ENCODE measurements at regions of chr19 and their contacts with region 1.

Region 1: GRCh38 chr19:35783469-35784434 is 8.4 kb downstream of the ARHGAP33 start:
- DNase-seq: peak; percentile 64
- ATAC-seq: peak; percentile 39
- H3K4me3 Mint-ChIP-seq: peak overlapping the region; percentile 65
- H3K27ac Mint-ChIP-seq: peak overlapping the region; percentile 5; the same call in 1 of the 2 replicates
- H3K4me1 Mint-ChIP-seq: peaks cover 29% of the 10 kb centered on the region
- H3K27me3 Mint-ChIP-seq: no peaks in the 10 kb centered on the region
- CTCF ChIP-seq: no peak

Region 2: GRCh38 chr19:35740423-35741202 is 43.1 kb before region 1 on chr19:
- CTCF ChIA-PET with region 1: interaction called, 41 read pairs
- POLR2A ChIA-PET with region 1: interaction called, 10 read pairs
- DNase-seq: peak; percentile 99
- ATAC-seq: peak; percentile 76
- H3K4me3 Mint-ChIP-seq: peak overlapping the region; percentile 81
- H3K27ac Mint-ChIP-seq: peak overlapping the region; percentile 99
- H3K4me1 Mint-ChIP-seq: peaks cover 11% of the 10 kb centered on the region
- H3K27me3 Mint-ChIP-seq: no peaks in the 10 kb centered on the region
- CTCF ChIP-seq: no peak

Region 3: DNA sequence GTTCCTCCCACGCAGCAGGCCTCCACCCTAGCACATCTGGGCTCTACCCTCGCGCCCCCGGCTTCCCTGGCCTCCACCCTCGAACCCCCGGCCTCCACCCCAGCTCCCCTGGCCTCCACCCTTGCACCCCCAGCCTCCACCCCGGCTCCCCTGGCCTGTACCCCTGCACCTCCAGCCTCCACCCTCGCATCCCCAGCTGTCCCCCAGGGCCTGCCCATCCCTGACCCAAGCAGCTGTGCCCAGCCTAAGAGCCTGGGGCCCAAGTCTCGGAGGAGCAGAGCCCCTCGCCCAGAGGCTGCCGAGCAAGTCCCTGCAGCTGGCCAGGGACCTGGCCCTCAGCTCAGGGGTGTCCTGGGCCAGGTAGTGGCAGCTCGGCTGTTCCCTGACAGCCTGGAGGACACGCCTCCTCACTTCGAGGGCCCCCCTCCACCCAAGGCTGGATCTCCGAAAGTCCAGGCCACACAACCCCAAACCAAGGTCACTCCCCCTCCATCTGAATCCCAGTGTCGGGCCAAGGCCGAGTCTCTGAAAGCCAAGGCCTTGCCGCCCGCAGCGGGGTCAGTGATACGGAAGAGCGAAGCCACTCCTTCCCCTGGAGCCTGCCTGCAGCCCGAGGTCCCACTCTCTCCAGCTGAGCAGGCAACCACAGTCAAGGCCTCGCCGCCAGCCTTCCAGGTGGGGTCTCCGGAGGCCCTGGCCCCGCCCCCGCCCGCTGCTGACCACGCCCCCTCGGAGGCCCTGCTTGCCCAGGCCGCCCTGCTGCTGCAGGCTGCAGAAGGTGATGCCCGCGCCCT is 16.3 kb before region 1 on chr19:
- CTCF ChIA-PET with region 1: interaction called, 11 read pairs
- POLR2A ChIA-PET with region 1: no interaction called
- DNase-seq: peak; percentile 92
- ATAC-seq: peak; percentile 94
- H3K4me3 Mint-ChIP-seq: peak overlapping the region; percentile 54
- H3K27ac Mint-ChIP-seq: peak overlapping the region; percentile 79
- H3K4me1 Mint-ChIP-seq: peaks cover 13% of the 10 kb centered on the region
- H3K27me3 Mint-ChIP-seq: peaks cover 2% of the 10 kb centered on the region
- CTCF ChIP-seq: no peak

Region 4: GRCh38 chr19:35822579-35822978 is 38.8 kb after region 1 on chr19:
- CTCF ChIA-PET with region 1: interaction called, 28 read pairs
- POLR2A ChIA-PET with region 1: no interaction called
- DNase-seq: no peak
- ATAC-seq: peak; percentile 32; the same call in 1 of the 2 replicates
- H3K4me3 Mint-ChIP-seq: no peak overlapping the region
- H3K27ac Mint-ChIP-seq: no peak overlapping the region
- H3K4me1 Mint-ChIP-seq: peaks cover 3% of the 10 kb centered on the region
- H3K27me3 Mint-ChIP-seq: peaks cover 48% of the 10 kb centered on the region
- CTCF ChIP-seq: no peak

Region 5: DNA sequence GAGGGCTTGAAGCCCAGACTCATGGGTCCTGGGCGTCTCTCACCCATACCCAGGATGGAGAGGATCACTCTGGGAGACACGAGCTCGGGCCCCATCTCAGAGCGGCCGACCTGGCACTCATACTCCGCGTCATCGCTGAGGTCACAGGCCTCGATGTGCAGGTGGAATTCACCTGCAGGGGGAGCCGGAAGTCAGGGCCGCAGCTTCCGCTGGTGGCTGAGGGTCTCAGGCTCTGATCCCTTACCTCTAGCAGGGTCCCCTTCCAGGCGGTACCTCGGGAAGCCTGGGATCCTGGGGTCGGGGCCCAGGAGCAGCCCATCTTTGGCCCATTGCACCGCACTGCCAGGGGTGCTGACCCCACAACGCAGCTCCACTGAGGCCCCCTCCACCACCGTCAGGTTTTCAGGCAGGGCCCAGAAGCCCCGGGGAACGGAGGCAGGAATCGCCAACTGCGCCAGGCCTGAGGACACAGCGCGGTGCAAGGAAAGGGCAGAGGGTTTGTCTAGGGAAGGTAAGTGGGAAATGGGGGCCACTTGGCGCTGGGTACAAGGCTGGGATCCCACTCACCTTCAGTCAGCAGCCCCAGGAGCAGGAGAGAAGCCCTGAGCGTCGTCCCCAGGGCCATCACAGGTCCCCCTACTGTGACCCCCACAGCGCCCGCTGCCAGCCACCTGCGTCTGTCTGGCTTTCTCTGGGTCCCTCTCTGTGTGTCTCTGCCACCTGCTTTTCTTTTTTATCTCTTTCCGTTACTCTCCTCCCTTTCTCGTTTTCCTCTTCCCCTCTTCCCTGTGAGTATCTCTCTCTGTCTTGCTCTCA is 67.7 kb after region 1 on chr19:
- CTCF ChIA-PET with region 1: interaction called, 16 read pairs
- POLR2A ChIA-PET with region 1: no interaction called
- DNase-seq: peak; percentile 84
- ATAC-seq: peak; percentile 83
- H3K4me3 Mint-ChIP-seq: peak overlapping the region; percentile 53
- H3K27ac Mint-ChIP-seq: peak overlapping the region; percentile 36; the same call in 1 of the 2 replicates
- H3K4me1 Mint-ChIP-seq: peaks cover 29% of the 10 kb centered on the region
- H3K27me3 Mint-ChIP-seq: peaks cover 86% of the 10 kb centered on the region
- CTCF ChIP-seq: peak; percentile 46; the same call in 1 of the 2 replicates

Region 6: GRCh38 chr19:35869327-35870123 is 85.8 kb after region 1 on chr19:
- CTCF ChIA-PET with region 1: interaction called, 18 read pairs
- POLR2A ChIA-PET with region 1: interaction called, 3 read pairs
- DNase-seq: peak; percentile 97
- ATAC-seq: peak; percentile 79
- H3K4me3 Mint-ChIP-seq: peak overlapping the region; percentile 86
- H3K27ac Mint-ChIP-seq: peak overlapping the region; percentile 97
- H3K4me1 Mint-ChIP-seq: peaks cover 26% of the 10 kb centered on the region
- H3K27me3 Mint-ChIP-seq: peaks cover 45% of the 10 kb centered on the region
- CTCF ChIP-seq: no peak